ENCODE measurements at regions of chr1 and their contacts with region 1.

Region 1: GRCh38 chr1:98323906-98324358 is 337.6 kb upstream of the SNX7 start:
- DNase-seq: peak; percentile 86
- H3K4me3 ChIP-seq: peak overlapping the region in 1 of 3 experiments; percentile 26
- H3K27ac ChIP-seq: peak overlapping the region; percentile 97
- H3K4me1 ChIP-seq: peaks cover 72% of the 10 kb centered on the region
- H3K27me3 ChIP-seq: no peaks in the 10 kb centered on the region
- CTCF ChIP-seq: no peak
- POLR2A ChIP-seq: peak; percentile 80

Region 2: GRCh38 chr1:98086796-98087441 is 237.0 kb before region 1 on chr1:
- CTCF ChIA-PET with region 1: interaction called, 3 read pairs
- POLR2A ChIA-PET with region 1: interaction called, 6 read pairs
- dilution Hi-C with region 1: no loop called
- intact Hi-C with region 1: loop called (anchors 1 kb)
- DNase-seq: peak; percentile 95
- H3K4me3 ChIP-seq: peak overlapping the region in 1 of 3 experiments; percentile 90
- H3K27ac ChIP-seq: peak overlapping the region; percentile 71
- H3K4me1 ChIP-seq: peaks cover 46% of the 10 kb centered on the region
- H3K27me3 ChIP-seq: no peaks in the 10 kb centered on the region
- CTCF ChIP-seq: no peak
- POLR2A ChIP-seq: no peak

Region 3: DNA sequence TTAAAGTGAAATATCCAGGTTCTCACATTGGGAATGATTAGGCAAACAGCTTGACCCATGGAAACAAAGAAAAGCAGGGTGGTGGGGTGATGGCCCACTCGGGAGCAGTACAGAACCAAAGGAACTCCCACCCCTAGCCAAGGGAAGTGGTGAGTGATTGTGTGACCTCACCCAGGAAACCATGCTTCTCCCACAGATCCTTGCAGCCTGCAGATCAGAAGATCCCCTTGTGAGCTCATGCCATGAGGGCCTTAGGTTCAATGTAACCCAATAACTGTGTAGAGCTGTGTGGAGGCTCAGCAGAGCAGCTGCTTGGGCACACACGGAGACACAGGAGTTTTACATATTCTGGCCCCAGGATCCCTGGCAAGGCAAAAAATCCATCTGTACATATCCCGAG is 91.3 kb before region 1 on chr1:
- CTCF ChIA-PET with region 1: no interaction called
- POLR2A ChIA-PET with region 1: no interaction called
- dilution Hi-C with region 1: no loop called
- intact Hi-C with region 1: no loop called
- DNase-seq: no peak
- H3K4me3 ChIP-seq: no peak overlapping the region
- H3K27ac ChIP-seq: no peak overlapping the region
- H3K4me1 ChIP-seq: no peaks in the 10 kb centered on the region
- H3K27me3 ChIP-seq: no peaks in the 10 kb centered on the region
- CTCF ChIP-seq: no peak
- POLR2A ChIP-seq: no peak

Region 4: DNA sequence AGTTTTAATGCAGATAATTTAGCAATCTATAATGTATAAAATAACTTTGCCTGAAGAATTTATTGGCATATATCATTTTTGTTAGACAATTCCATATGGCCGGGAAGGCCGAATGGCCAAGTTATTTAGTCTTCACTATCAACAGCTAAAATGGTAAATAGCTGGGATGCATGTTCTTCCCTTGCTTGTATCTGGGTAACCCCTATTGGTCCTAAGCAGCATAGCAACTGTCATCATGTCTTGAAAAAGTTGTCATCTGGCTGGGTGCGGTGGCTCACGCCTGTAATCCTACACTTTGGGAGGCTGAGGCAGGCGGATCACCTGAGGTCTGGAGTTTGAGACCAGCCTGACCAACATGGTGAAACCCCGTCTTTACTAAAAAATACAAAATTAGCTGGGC is 63.1 kb before region 1 on chr1:
- CTCF ChIA-PET with region 1: interaction called, 4 read pairs
- POLR2A ChIA-PET with region 1: no interaction called
- dilution Hi-C with region 1: no loop called
- intact Hi-C with region 1: loop called (anchors 1 kb)
- DNase-seq: peak; percentile 12
- H3K4me3 ChIP-seq: no peak overlapping the region
- H3K27ac ChIP-seq: no peak overlapping the region
- H3K4me1 ChIP-seq: peaks cover 41% of the 10 kb centered on the region
- H3K27me3 ChIP-seq: no peaks in the 10 kb centered on the region
- CTCF ChIP-seq: peak in 1 of 2 donors; percentile 37
- POLR2A ChIP-seq: no peak

Region 5: DNA sequence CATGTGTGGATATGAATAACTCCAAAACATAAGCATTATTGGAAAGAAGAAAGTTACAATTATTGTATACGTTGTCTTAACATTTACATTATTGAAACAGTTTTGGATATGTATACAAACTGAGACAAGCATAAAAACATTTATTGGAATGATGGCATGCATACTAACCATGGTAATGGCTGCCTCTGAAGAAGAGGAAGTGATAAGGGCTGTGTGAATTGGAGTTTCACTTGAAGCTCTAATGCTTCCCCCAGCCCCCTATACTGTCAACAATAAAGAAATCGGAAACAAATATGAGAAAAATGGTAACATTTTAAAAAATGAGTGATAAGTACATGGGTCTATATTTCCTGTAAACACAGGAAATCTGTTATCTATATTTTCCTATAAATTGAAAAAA is 35.4 kb before region 1 on chr1:
- CTCF ChIA-PET with region 1: no interaction called
- POLR2A ChIA-PET with region 1: no interaction called
- dilution Hi-C with region 1: no loop called
- intact Hi-C with region 1: no loop called
- DNase-seq: no peak
- H3K4me3 ChIP-seq: no peak overlapping the region
- H3K27ac ChIP-seq: no peak overlapping the region
- H3K4me1 ChIP-seq: no peaks in the 10 kb centered on the region
- H3K27me3 ChIP-seq: no peaks in the 10 kb centered on the region
- CTCF ChIP-seq: no peak
- POLR2A ChIP-seq: no peak

Region 6: GRCh38 chr1:98344731-98345130 is 20.8 kb after region 1 on chr1:
- CTCF ChIA-PET with region 1: interaction called, 5 read pairs
- POLR2A ChIA-PET with region 1: no interaction called
- dilution Hi-C with region 1: no loop called
- intact Hi-C with region 1: loop called (anchors 1 kb)
- DNase-seq: peak; percentile 88
- H3K4me3 ChIP-seq: no peak overlapping the region
- H3K27ac ChIP-seq: peak overlapping the region; percentile 90
- H3K4me1 ChIP-seq: peaks cover 38% of the 10 kb centered on the region
- H3K27me3 ChIP-seq: no peaks in the 10 kb centered on the region
- CTCF ChIP-seq: no peak
- POLR2A ChIP-seq: peak; percentile 12